GM18951 (cell line): ENCODE measurements at regions of chr18 and their contacts with region 1.

Region 1: GRCh38 chr18:23356915-23357601 is 96.0 kb upstream of the RIOK3 start:
- POLR2A ChIP-seq: no peak

Region 2: DNA sequence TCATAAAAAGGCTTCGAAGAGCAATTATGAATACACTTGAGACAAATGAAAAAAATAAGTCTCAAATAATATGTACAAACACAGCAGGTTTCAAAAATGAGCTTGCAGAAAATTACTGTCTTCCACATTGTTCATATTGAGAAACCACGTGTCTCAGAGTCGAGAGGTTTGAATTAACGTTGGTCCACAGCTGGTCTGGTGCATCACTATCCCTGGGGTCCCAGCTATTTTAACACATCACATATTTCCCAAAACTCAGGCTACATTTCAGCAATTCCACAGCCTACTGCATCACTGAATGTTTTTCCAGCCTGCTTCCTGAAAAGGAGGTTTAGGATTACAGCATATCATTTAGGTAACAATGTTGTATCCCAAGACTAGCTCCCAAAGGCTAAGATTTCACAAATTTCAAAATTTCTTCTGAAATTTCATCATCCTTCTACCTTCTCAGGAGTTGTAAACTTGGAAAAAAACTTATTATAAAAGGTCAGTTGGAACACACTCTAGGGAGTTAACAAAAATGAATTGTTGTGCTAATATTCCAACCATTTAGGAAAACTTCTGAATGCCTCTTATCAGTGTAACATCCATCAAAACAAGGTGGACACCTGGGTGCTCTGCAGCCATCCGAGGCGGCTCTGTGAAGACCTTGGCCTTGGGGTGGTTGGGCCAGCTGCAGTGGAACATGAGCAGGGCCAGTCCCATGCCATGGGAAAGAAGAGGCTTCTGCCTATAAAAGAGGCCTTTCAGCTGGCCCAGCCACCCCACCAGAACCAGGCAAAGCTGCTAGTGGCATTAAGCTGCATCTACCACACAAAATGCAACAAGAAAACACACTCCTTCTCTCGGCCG is 622.1 kb before region 1 on chr18:
- in situ Hi-C with region 1: no loop called
- POLR2A ChIP-seq: no peak

Region 3: GRCh38 chr18:23131693-23132319 is 225.3 kb before region 1 on chr18:
- in situ Hi-C with region 1: loop called (anchors 5 kb)
- POLR2A ChIP-seq: no peak

Region 4: DNA sequence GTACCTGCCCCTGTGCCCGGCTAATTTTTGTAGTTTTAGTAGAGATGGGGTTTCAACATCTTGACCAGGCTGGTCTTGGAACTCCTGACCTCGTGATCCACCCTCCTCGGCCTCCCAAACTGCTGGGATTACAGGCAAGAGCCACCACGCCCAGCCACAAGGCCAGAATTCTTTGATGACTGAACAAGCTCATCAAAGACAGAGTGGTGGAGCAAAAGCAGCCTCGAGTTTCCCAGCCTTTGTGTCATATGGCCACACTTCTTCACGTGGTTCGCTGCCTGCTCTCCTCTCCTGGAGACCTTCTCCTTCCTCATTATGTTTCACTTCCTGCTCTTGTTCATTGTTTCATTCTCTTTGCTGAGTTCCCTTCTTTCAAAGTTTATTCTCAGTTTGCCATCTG is 239.1 kb after region 1 on chr18:
- in situ Hi-C with region 1: no loop called
- POLR2A ChIP-seq: no peak

Region 5: GRCh38 chr18:24322584-24323136 is 965.6 kb after region 1 on chr18:
- in situ Hi-C with region 1: no loop called
- POLR2A ChIP-seq: no peak